Activated B cell treated with CpG ODN at 0.5 μM for 24 hours (primary cell): ENCODE measurements at regions of chr2 and their contacts with region 1.

Region 1: GRCh38 chr2:101577173-101577572 is 102.3 kb upstream of the RFX8 start:
- DNase-seq: no peak
- ATAC-seq: no peak
- H3K4me3 Mint-ChIP-seq: no peak overlapping the region
- H3K27ac Mint-ChIP-seq: no peak overlapping the region
- H3K4me1 Mint-ChIP-seq: no peaks in the 10 kb centered on the region
- H3K27me3 Mint-ChIP-seq: peaks cover 6% of the 10 kb centered on the region
- CTCF ChIP-seq: no peak

Region 2: DNA sequence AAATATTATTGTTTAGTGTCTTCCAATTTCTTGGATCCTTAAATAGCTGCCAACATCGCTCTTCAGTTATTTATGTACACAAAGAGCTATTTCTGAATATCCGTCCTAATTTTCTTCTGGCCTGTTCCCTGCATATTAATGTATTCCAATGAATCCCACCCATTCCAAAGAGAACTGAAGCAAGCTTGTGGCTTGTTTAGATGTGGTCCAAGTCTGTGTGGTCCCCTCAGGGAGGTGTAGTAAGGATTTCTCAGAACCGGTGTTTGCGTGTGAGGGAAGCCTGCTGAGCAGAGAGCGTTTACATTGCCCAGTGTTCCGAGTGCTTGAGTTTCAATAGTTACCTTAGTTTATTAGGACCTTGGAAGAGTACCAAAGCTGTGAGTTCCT is 540.3 kb after region 1 on chr2:
- CTCF ChIA-PET with region 1: no interaction called
- POLR2A ChIA-PET with region 1: interaction called, 13 read pairs
- intact Hi-C with region 1: no loop called
- DNase-seq: no peak
- ATAC-seq: no peak
- H3K4me3 Mint-ChIP-seq: no peak overlapping the region
- H3K27ac Mint-ChIP-seq: no peak overlapping the region
- H3K4me1 Mint-ChIP-seq: no peaks in the 10 kb centered on the region
- H3K27me3 Mint-ChIP-seq: peaks cover 8% of the 10 kb centered on the region
- CTCF ChIP-seq: no peak